ENCODE measurements at regions of chr4 and their contacts with region 1.

Region 1: GRCh38 chr4:169270810-169271691 is at the start of gene SH3RF1:
- DNase-seq: peak; percentile 90 to 97 (median 96)
- ATAC-seq: peak; percentile 97
- H3K4me3 ChIP-seq: peak within 1 kb of the TSS; percentile 83
- H3K27ac ChIP-seq: peak within 1 kb of the TSS; percentile 33
- H3K4me1 ChIP-seq: peaks cover 3% of the 10 kb centered on the region
- H3K27me3 ChIP-seq: no peaks in the 10 kb centered on the region
- total RNA-seq, gene SH3RF1: 7.4 to 16.7 (median 9.9) TPM

Region 2: DNA sequence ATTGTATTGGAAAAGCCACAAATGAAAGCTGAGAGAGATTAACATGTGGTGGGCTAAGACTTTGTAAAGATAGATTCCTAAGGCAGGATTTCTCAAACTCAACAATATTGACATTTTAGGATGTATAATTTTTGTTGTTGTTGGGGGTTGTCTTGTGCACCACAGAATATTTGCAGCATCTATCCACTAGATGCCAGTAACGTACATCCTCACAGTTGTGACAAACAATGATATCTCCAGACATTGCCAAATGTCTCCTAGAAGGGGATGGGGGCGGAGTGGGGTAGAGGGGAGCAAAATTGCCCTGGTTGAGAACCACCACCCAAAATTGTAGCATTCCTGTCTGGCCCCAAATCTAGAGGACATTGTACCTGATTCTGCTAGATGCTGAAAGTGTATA is 246.3 kb before region 1 on chr4:
- intact Hi-C with region 1: loop called in 2 of 4 experiments (anchors 10 kb)
- DNase-seq: no peak
- ATAC-seq: peak; percentile 85 to 90
- H3K4me3 ChIP-seq: no peak overlapping the region
- H3K27ac ChIP-seq: no peak overlapping the region
- H3K4me1 ChIP-seq: no peaks in the 10 kb centered on the region
- H3K27me3 ChIP-seq: no peaks in the 10 kb centered on the region

Region 3: DNA sequence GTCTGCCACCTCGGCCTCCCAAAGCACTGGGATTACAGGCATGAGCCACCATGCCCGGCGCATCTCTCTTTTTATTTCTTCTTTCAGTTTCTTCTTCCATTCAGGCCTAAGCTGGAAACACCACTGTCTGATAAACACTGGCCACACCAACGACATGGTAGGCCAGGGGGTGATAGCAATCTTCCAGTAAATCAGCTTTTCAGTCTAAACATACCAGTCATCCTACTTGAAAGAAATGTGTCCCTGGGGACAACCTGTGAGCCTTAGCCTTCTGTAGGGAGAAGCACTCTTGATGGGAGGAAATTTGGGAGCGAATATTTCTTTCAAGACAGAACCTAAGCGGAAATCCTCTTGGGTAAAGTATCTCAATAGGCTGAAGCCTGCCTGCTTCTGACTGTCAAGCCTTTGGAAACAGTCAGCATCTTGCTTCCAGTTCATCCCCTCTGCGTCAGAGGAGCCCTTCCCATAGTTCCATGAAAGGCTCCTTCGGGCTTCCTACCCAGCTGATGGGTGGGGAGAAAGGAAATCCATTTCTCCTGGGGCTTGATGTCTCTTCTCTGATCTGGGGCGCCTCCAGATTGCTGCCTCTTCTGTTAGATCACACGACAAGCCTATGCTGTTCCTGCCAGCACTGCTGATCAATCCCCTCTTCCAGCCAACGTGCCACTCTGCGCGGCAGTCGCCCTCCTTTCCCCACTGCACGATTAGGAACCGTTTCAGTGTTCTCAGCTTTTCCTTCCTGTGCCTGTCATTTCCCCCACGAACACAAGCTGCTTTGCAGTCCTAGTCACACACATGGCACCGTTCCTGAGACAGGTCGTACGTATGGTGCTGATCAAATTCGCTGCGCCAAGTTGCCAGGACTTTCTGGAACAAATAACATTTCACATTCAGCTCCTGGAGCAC is 211.5 kb before region 1 on chr4:
- intact Hi-C with region 1: loop called in 1 of 4 experiments (anchors 10 kb)
- DNase-seq: peak; percentile 62 to 82 (median 64)
- ATAC-seq: peak; percentile 66 to 89
- H3K4me3 ChIP-seq: no peak overlapping the region
- H3K27ac ChIP-seq: peak overlapping the region; percentile 60
- H3K4me1 ChIP-seq: peaks cover 7% of the 10 kb centered on the region
- H3K27me3 ChIP-seq: no peaks in the 10 kb centered on the region

Region 4: GRCh38 chr4:169179609-169180521 is 91.2 kb before region 1 on chr4:
- intact Hi-C with region 1: no loop called
- DNase-seq: no peak
- ATAC-seq: no peak
- H3K4me3 ChIP-seq: no peak overlapping the region
- H3K27ac ChIP-seq: no peak overlapping the region
- H3K4me1 ChIP-seq: peaks cover 8% of the 10 kb centered on the region
- H3K27me3 ChIP-seq: no peaks in the 10 kb centered on the region

Region 5: DNA sequence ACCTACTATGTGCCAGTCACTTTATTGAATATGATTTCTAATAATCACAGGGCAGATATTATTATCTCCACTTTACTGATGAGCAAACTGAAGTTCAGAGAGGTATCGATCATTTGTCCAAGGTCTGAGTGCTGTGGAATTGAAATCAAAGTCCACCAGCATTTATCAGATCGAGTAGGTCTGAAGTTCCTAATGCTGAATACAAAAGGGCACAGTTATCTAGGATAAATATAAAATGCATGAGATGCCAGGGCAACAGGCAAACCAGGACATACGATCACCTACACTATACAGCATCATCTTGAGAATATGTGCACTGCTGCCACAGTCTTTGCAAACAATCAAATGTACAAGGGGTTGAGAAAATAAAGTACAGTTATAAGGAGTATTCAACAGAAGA is 56.9 kb after region 1 on chr4:
- intact Hi-C with region 1: no loop called
- DNase-seq: no peak
- ATAC-seq: no peak
- H3K4me3 ChIP-seq: no peak overlapping the region
- H3K27ac ChIP-seq: no peak overlapping the region
- H3K4me1 ChIP-seq: no peaks in the 10 kb centered on the region
- H3K27me3 ChIP-seq: no peaks in the 10 kb centered on the region

Region 6: DNA sequence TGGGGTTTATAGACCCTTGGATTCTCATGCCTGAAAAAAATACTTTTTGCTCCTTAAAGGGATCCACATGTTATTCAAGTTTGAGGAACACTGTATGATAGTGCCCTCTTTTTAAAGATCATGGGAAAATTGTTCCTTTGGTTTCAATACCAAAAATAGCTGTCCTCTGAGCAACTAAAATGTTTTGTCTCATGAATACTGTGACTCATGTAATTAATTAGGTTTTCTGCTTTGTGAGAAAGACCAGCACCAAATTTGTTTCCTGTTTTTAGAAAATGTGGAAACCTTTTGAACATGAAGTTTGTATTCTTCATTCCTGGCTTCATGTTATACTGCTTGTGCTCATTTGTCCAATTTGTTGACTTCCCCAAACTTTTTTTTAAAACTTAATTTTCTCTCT is 127.3 kb after region 1 on chr4:
- intact Hi-C with region 1: loop called in 1 of 4 experiments (anchors 5 kb)
- DNase-seq: no peak
- ATAC-seq: no peak
- H3K4me3 ChIP-seq: no peak overlapping the region
- H3K27ac ChIP-seq: no peak overlapping the region
- H3K4me1 ChIP-seq: no peaks in the 10 kb centered on the region
- H3K27me3 ChIP-seq: no peaks in the 10 kb centered on the region

Region 7: DNA sequence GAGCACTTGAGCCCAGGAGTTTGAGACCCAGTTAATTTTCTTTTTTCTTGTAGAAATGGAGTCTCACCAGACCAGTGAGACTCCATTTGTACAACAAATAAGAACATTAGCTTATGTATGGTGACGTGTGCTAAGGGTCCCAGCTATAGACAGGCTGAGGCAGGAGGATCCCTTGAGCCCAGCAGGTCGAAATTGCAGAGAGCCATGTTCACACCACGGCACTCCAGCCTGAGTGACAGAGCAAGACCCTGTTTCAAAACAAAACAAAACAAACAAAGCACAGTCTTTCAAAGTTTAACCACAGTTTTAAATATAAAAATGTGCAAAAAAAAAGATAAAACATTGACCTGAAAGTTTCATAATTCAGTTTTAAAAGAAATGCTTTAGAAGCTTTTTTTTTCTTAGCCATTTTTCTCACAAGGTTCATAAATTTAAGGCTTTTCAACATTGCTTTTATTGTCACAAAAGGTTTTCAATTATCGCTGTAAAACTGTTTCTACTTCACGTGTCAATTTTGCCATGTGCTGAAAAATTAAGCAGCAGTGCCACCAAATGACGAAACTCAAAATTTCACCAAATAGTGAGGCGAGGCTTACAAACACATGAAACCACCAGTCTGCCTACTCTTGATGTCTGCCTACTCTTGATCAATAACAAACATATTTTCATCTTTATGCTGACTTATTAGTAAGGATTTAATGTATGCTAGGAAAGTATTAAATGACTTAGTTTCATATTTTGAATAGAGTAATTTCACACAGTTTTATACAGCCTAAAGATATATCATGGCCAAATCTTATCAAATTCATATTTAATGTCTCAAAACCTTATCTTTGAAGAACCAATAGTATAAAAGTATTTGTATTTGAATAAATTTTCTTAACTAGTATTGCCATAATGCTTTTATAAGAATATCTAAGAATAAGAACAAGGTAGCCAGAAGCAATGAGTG is 215.0 kb after region 1 on chr4:
- intact Hi-C with region 1: loop called in 1 of 4 experiments (anchors 10 kb)
- DNase-seq: no peak
- ATAC-seq: peak in 1 of 2 donors; percentile 52
- H3K4me3 ChIP-seq: no peak overlapping the region
- H3K27ac ChIP-seq: no peak overlapping the region
- H3K4me1 ChIP-seq: no peaks in the 10 kb centered on the region
- H3K27me3 ChIP-seq: no peaks in the 10 kb centered on the region